Left cardiac atrium (tissue), 4 donors: ENCODE measurements at regions of chr2 and their contacts with region 1.

Region 1: DNA sequence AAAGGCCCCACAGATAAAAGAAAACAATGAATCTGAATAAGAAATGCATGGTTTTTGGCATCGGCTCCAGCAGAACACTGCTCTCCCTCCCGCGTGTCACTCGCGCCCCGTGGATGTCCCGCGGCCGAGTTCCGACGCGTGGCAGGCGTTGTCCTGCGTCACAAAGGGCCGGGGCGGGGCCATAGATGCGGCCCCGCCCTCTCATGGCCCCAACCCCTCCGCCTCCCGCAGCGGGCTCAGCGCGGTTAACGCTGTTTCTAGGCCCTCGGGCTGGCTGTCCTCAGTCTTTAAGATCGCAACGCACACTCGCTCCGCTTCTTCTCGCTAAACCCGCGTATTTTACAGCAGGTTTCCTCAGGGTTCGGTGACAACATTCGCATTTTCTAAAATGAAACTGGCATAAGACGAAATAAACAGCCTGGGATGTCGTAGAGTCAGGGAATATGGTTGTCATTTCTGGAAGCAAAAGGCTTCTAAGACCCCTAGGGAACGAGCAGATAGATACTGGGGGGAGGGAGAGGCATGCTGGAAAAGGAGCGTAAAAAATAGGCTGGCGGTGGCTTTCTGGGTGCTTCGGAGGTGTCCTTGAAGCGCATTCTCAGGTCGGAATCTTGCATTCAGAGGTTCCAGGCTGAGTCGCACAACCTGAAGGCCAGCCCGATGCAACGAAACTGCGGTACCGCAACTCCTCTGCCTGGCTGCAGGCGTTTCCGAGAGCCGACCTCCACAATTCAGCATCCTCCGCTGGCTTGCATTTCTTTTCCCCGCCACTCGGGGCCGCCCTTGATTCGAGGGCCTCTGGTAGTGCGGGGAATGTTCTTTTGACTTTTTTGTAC is at the start of gene FKBP7:
- DNase-seq: peak; percentile 90
- ATAC-seq: peak; percentile 85 to 86
- total RNA-seq, gene FKBP7: 12.7 to 13.5 TPM

Region 2: GRCh38 chr2:178450774-178451525 is 27.7 kb before region 1 on chr2 and contains the starts of genes PJVK and PRKRA:
- intact Hi-C with region 1: loop called in 1 of 2 experiments (anchors 2 kb)
- DNase-seq: peak; percentile 98
- ATAC-seq: peak; percentile 98 to 99
- total RNA-seq, gene PJVK: 1.2 to 1.4 TPM
- total RNA-seq, gene PRKRA: 32.1 to 44.3 TPM

Region 3: GRCh38 chr2:178530625-178531142 is 52.0 kb after region 1 on chr2:
- intact Hi-C with region 1: no loop called
- DNase-seq: no peak
- ATAC-seq: no peak